ENCODE measurements at regions of chr1 and their contacts with region 1.

Region 1: DNA sequence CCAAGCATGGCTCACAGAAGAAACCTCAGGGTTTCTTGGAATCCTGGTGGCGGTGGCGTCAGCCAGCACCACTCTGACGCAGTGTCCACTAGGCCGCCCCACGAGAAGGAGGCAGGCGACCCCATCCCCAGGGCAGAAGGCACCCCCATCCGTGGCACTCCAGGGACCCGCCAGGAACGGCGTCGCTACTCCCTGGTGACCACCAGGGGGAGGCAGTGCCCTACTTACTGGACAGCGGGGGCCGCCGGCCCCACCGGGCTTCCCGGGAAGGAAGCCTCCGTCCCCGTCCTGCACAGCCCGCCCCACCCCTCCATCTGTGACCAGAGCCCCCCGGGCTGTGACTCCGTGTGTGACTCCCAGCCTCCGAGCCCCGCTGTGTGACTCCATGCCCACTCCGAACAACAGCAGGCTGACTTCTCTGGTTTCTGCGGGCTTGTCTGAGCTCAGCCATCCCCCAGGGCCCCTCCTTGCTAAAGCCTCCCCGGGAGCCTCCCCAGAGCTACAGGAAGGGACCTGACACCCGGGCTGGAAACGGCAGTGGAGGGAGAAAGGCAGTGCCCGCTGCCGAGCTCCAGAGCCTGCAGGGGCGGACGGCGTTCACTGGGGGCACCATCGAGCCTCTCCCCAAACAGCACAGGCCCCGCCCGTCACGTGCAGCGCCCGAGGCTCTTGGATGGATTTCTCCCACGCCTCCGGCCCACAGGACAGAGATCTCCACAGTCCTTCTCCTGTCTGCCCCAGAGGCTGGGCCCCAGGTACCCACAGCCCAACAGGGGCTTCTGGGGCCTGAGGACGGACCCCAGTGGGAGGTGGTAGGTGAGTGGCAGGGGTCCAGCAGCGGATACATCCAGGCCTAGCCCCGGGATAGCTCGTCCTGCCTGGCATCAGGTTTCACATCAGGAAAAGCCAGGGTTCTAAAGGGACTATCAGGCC is 21.1 kb downstream of the KIF17 start:
- DNase-seq: peak; percentile 80 to 85 (median 85)
- ATAC-seq: peak; percentile 92 to 96 (median 92)
- H3K4me3 ChIP-seq: peak overlapping the region; percentile 45 to 61 (median 56)
- H3K27ac ChIP-seq: peak overlapping the region; percentile 21 to 64 (median 27)
- H3K4me1 ChIP-seq: no peaks in the 10 kb centered on the region
- H3K27me3 ChIP-seq: no peaks in the 10 kb centered on the region
- CTCF ChIP-seq: peak; percentile 82 to 93 (median 89)
- POLR2A ChIP-seq: peak; percentile 24

Region 2: GRCh38 chr1:20521960-20522861 is 174.5 kb before region 1 on chr1:
- intact Hi-C with region 1: no loop called
- DNase-seq: peak in 2 of 3 donors; percentile 52 to 73
- ATAC-seq: peak; percentile 85 to 93 (median 90)
- H3K4me3 ChIP-seq: no peak overlapping the region
- H3K27ac ChIP-seq: no peak overlapping the region
- H3K4me1 ChIP-seq: no peaks in the 10 kb centered on the region
- H3K27me3 ChIP-seq: no peaks in the 10 kb centered on the region
- CTCF ChIP-seq: peak; percentile 82 to 90 (median 86)
- POLR2A ChIP-seq: no peak

Region 3: DNA sequence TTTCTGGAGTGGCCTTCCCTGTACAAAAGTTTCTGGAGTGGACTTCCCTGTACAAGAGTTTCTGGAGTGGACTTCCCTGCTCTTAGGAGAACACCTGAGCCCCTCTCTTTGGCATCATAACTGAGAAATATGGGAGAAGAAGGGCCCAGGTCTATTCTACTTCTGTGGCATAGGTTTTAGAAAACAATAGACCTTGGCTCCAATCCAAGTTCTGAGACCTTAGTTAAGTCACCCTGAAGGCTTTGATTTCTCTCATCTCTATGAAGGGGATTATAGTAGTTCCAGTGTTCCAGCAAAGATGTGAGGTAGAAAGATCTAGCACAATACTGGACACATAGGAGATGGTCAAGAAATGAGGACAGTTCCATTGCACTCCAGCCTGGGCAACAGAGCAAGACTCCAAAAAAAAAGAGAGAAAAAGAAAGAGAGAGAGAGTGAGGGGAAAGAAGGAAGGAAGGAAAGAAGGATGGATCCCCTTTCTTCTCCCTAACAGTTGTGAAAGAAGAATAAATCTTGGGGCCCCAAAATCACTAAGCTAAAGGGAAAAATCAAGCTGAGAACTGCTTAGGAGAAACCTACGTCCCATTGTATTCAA is 493.3 kb after region 1 on chr1:
- intact Hi-C with region 1: loop called (anchors 5 to 10 kb)
- DNase-seq: no peak
- ATAC-seq: no peak
- H3K4me3 ChIP-seq: no peak overlapping the region
- H3K27ac ChIP-seq: no peak overlapping the region
- H3K4me1 ChIP-seq: no peaks in the 10 kb centered on the region
- H3K27me3 ChIP-seq: no peaks in the 10 kb centered on the region
- CTCF ChIP-seq: no peak
- POLR2A ChIP-seq: no peak

Region 4: GRCh38 chr1:21198929-21199328 is 502.3 kb after region 1 on chr1:
- intact Hi-C with region 1: loop called (anchors 5 to 10 kb)
- DNase-seq: no peak
- ATAC-seq: no peak
- H3K4me3 ChIP-seq: no peak overlapping the region
- H3K27ac ChIP-seq: no peak overlapping the region
- H3K4me1 ChIP-seq: no peaks in the 10 kb centered on the region
- H3K27me3 ChIP-seq: no peaks in the 10 kb centered on the region
- CTCF ChIP-seq: no peak
- POLR2A ChIP-seq: no peak

Measured in right lobe of liver (tissue), 6 donors.